ENCODE measurements at regions of chr9 and their contacts with region 1.

Region 1: DNA sequence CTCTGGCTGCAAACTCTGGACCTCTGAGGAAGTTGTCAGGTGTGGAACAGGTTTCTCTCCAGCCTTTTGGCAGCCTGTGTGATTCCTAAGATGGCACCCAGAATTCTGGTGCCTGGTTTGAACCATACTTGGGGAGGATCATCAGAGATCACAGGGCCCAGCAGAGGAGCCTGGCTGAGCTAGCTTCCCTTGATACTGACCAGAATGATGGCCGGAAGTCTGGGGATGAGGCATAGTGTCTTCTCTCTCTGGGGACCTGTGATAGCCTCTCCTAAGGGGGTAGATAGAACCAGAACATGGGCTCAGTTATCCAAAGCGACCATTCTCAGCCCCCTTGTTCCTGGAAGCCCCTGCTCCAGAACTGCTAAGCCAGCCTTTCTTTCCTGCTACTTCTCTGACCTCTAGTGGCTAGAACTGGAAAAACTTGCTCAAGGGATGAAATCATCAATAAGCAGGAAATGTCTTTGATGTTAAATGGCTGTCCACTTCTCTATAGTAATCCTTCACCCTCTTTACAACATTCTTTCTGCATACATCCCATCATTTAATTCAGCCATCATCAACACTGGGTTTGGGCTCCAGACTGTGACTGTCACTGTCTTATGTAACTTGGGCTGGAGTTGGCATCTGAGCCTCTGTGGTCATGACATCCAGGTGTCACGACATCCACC is 55.1 kb downstream of the C9orf152 start:
- DNase-seq: no peak
- H3K4me3 Mint-ChIP-seq: peak overlapping the region; percentile 55
- H3K27ac Mint-ChIP-seq: peak overlapping the region; percentile 79
- H3K4me1 Mint-ChIP-seq: peaks cover 100% of the 10 kb centered on the region
- H3K27me3 Mint-ChIP-seq: no peaks in the 10 kb centered on the region

Region 2: GRCh38 chr9:109411798-109412352 is 741.0 kb before region 1 on chr9:
- intact Hi-C with region 1: loop called (anchors 2 kb)
- DNase-seq: no peak
- H3K4me3 Mint-ChIP-seq: peak overlapping the region; percentile 32
- H3K27ac Mint-ChIP-seq: peak overlapping the region; percentile 92
- H3K4me1 Mint-ChIP-seq: peaks cover 73% of the 10 kb centered on the region
- H3K27me3 Mint-ChIP-seq: no peaks in the 10 kb centered on the region

Region 3: DNA sequence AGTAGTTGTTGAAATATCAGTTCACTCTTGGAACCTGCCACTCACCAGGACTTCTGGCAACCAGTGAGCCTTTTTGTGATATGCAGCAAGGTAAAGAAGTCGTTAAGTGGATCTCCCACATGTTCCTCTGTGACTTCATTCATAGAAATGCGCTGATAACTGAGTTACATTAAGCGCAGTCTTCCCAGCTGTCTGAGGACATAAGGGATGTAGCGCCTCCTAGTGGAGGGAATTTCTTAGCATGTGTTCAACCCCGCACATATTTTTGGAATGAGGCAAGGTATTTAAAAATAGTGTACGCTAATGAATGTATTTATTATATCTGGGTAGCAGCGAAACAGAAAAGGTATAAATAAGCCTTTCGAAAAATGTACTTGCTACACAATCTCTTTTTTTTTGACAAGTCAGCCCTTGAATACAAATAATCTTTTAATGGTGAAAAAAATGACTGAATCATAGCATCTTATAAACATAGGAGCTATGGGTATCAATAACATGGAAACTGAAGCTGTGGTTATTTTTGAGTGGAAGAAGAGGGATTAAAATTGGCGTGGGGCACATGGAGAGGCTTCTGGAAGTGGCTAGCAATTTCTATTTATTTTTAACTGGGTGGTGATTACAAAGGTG is 334.9 kb before region 1 on chr9:
- intact Hi-C with region 1: loop called (anchors 1 kb)
- DNase-seq: peak; percentile 22
- H3K4me3 Mint-ChIP-seq: no peak overlapping the region
- H3K27ac Mint-ChIP-seq: no peak overlapping the region
- H3K4me1 Mint-ChIP-seq: peaks cover 9% of the 10 kb centered on the region
- H3K27me3 Mint-ChIP-seq: peaks cover 2% of the 10 kb centered on the region

Region 4: DNA sequence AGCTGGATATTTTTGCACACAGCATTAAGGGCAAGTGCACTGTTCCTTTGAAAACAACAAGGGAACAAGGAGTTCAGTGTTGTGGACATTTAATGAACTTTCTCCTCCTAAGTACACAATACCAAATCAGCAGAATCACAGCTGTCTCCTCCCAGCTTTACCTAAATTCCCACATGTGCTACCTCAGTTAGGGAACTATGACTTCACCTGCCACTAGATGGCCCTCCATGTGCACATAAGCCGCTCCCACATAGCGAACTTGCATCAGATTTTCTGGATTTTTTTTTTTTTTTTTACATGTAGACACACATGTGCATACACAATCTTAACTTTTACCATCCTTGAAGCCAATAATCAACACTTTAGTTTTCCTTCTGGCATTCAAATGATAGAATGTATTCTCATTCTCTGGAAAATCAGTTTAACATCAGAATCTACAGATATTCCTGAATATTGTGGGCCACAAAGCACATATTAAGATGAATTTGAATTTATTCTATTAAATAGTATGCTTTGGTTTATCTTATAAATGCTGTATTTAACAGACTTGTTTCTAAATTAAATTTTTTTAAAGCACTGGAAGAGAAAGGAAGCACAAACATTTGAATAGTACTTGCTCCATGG is 249.2 kb before region 1 on chr9:
- intact Hi-C with region 1: loop called (anchors 1 kb)
- DNase-seq: peak; percentile 50
- H3K4me3 Mint-ChIP-seq: no peak overlapping the region
- H3K27ac Mint-ChIP-seq: peak overlapping the region; percentile 0
- H3K4me1 Mint-ChIP-seq: peaks cover 56% of the 10 kb centered on the region
- H3K27me3 Mint-ChIP-seq: no peaks in the 10 kb centered on the region

Region 5: GRCh38 chr9:109950710-109951443 is 202.0 kb before region 1 on chr9:
- intact Hi-C with region 1: loop called (anchors 1 kb)
- DNase-seq: no peak
- H3K4me3 Mint-ChIP-seq: peak overlapping the region; percentile 31
- H3K27ac Mint-ChIP-seq: peak overlapping the region; percentile 91
- H3K4me1 Mint-ChIP-seq: peaks cover 42% of the 10 kb centered on the region
- H3K27me3 Mint-ChIP-seq: peaks cover 2% of the 10 kb centered on the region

Region 6: DNA sequence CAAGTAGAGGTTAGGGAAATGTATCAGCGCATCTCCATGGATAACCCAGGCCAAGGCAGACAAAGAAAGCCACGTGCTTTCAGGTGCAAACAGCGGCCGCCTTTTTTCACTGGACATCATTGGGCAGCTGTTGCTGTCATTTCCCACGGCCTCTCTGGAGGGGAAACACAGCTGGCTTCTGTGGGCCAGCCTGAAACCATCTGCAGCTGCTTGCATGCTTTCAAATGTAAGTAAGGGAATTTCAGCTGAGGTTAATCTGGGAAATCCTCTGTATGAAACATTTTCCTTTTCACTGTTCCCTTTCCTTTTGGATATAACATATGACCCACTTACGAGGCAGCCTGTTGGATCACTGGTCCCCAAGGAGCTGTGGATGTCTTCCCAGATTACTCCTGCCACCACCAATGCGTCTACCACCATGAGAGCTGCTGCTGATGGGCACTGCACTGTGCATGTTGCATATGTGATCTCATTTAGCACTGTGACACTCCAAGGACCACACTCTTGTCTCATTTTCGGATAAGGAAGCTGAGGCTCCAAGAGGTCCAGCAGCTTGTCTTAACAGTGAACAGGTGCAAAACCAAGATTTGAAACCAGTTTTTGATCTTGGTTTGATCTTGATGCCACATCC is 51.2 kb before region 1 on chr9:
- intact Hi-C with region 1: loop called (anchors 2 kb)
- DNase-seq: no peak
- H3K4me3 Mint-ChIP-seq: no peak overlapping the region
- H3K27ac Mint-ChIP-seq: no peak overlapping the region
- H3K4me1 Mint-ChIP-seq: peaks cover 60% of the 10 kb centered on the region
- H3K27me3 Mint-ChIP-seq: no peaks in the 10 kb centered on the region

Region 7: GRCh38 chr9:110440172-110440571 is 287.3 kb after region 1 on chr9:
- intact Hi-C with region 1: no loop called
- DNase-seq: no peak
- H3K4me3 Mint-ChIP-seq: no peak overlapping the region
- H3K27ac Mint-ChIP-seq: no peak overlapping the region
- H3K4me1 Mint-ChIP-seq: no peaks in the 10 kb centered on the region
- H3K27me3 Mint-ChIP-seq: peaks cover 2% of the 10 kb centered on the region